Activated CD4-positive, alpha-beta T cell treated with anti-CD3 and anti-CD28 coated beads, Interleukin-2, amount 10 ng/mL, durations not matched to agents 24 days and 14 days (primary cell): ENCODE measurements at regions of chr22 and their contacts with region 1.

Region 1: DNA sequence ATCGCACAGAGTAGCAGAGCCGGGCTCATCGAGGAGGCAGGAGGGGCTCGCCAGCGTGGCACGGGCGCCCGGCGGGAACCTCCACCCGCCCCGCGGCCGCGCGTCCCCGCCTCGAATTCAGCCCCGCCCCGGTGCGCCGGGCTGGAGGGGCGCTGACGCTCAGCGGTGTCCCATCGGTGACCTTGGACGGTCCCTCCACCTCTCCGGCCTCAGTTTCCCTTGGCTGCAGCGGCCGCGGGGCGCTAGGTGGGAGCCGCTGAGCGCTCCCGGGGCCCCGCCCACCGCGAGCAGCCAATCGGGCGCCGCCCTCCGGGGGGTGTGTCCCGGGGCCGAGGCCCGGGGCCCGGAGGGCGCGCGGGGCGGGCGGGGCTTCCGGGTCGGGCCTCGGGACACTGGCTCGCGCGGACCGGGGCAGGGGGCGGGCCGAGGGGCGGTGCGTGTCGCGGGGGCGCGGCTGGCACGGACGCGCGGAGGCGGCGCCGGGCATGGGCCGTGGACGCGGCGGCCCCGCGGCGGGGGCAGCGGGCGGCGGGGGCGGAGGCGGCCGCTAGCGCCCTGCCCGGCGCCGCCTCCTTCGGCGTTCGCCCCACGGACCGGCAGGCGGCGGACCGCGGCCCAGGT is at the start of gene PPARA:
- DNase-seq: peak; percentile 98
- H3K4me3 Mint-ChIP-seq: peak within 1 kb of the TSS; percentile 84
- H3K27ac Mint-ChIP-seq: peak within 1 kb of the TSS; percentile 69
- H3K4me1 Mint-ChIP-seq: peaks cover 13% of the 10 kb centered on the region
- H3K27me3 Mint-ChIP-seq: peaks cover 30% of the 10 kb centered on the region
- total RNA-seq, gene PPARA: 13.0 and 14.4 TPM in 2 replicates

Region 2: GRCh38 chr22:46250035-46250782 is 100.1 kb after region 1 on chr22 and contains the start of gene CDPF1:
- intact Hi-C with region 1: loop called (anchors 5 kb)
- DNase-seq: peak; percentile 98
- H3K4me3 Mint-ChIP-seq: peak within 1 kb of the TSS; percentile 91
- H3K27ac Mint-ChIP-seq: peak within 1 kb of the TSS; percentile 89
- H3K4me1 Mint-ChIP-seq: peaks cover 27% of the 10 kb centered on the region
- H3K27me3 Mint-ChIP-seq: no peaks in the 10 kb centered on the region
- total RNA-seq, gene CDPF1: 10.4 and 10.6 TPM in 2 replicates

Region 3: GRCh38 chr22:46267431-46268279 is 117.5 kb after region 1 on chr22 and contains the start of gene TTC38:
- intact Hi-C with region 1: loop called (anchors 5 kb)
- DNase-seq: peak; percentile 87
- H3K4me3 Mint-ChIP-seq: peak within 1 kb of the TSS; percentile 90
- H3K27ac Mint-ChIP-seq: peak within 1 kb of the TSS; percentile 69
- H3K4me1 Mint-ChIP-seq: peaks cover 17% of the 10 kb centered on the region
- H3K27me3 Mint-ChIP-seq: peaks cover 33% of the 10 kb centered on the region
- total RNA-seq, gene TTC38: 19.2 and 20.3 TPM in 2 replicates

Region 4: DNA sequence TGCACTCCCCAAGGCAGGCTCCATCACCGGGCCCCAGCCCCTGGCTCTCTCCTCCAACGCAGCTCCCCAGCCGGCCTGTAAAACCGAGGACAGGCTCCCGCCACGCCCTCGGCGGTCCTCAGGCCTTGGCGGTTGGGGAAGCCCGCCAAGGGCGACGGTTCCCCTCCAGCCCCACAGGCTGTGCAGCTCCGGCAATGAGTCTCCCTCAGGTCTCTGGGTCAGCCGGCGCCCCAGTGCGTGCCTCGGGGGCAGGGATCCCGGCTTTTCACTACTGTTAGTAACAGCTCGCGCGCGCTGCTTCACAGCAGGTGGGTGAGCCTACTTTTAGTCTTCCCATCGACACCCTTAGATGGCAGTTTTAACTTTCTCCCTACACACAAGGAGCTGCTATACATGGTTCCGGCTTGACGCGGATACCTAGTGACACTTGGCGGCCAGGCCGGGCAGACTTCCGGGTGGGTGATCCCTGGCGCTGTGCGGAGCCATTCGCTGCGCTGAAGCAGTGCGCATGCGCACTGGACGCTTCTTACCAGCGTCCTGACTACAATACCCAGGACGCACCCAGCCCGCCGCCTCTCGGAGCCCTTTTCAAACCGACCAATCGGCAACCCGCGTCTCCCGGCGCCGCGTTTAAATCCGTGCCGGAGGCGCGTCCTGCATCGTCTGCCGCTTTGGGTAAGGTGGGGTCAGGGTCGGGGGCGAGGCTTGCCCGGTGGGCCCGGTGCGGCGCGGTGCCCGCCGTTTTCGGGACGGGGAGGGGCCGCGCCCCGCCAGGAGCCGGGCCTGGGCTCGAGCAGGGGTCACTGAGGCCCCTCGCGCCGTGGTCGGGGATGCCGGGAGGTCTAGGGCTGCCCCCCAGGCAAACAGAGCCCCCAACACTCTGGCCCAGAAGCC is 146.4 kb after region 1 on chr22 and contains the start of gene GTSE1:
- intact Hi-C with region 1: loop called (anchors 5 kb)
- DNase-seq: peak; percentile 99
- H3K4me3 Mint-ChIP-seq: peak within 1 kb of the TSS; percentile 91
- H3K27ac Mint-ChIP-seq: peak within 1 kb of the TSS; percentile 94
- H3K4me1 Mint-ChIP-seq: peaks cover 44% of the 10 kb centered on the region
- H3K27me3 Mint-ChIP-seq: no peaks in the 10 kb centered on the region
- total RNA-seq, gene GTSE1: 37.6 and 40.8 TPM in 2 replicates

Region 5: DNA sequence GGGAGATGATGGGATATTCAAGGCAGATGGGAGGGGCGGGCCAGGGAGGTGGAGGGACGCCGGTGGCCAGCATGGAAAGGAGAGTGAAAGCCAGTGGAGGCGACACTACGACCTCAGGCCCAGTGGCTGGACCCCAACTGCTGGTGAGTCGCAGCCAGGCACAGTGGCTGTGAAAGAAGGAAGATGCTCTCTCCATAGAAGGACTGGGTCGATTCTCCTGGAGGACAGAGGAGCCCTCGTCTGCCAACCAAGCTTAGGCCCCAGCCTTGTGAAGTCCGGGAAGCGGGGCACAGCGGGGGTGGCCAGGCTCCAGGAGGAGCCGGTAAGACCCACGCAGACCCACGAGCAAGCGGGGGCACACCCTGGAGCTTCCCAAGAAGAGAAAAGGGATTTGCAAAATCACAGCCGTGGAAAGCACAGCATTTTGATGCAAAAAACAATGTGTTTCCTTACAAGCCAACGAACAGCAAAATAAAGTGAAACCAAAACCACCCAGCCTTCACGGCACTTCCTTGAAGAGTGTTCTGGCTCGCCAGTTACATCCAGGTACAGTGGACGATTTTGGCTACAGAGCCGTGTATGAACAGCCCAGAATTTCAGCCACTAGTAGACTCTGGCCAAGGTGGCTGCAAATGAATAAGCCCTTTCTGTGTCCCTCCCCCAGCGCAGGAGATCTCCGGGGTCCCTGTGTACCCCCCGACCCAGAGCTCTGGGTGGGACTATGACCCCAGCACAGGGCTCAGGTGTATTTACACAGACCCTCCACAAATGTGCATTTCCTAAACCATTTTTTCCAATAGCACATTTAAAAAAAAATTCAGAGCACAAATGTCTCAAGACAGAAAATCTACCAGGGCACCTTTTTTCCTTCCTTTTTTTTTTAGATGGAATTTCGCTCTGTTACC is 282.3 kb after region 1 on chr22:
- intact Hi-C with region 1: no loop called
- DNase-seq: peak; percentile 86
- H3K4me3 Mint-ChIP-seq: peak overlapping the region; percentile 81
- H3K27ac Mint-ChIP-seq: peak overlapping the region; percentile 94
- H3K4me1 Mint-ChIP-seq: peaks cover 11% of the 10 kb centered on the region
- H3K27me3 Mint-ChIP-seq: no peaks in the 10 kb centered on the region